ENCODE measurements at regions of chrX and their contacts with region 1.

Region 1: GRCh38 chrX:73855546-73855945 is 292.5 kb downstream of the CHIC1 start:
- DNase-seq: no peak

Region 2: GRCh38 chrX:73799888-73800287 is 55.7 kb before region 1 on chrX:
- intact Hi-C with region 1: no loop called
- DNase-seq: no peak

Region 3: DNA sequence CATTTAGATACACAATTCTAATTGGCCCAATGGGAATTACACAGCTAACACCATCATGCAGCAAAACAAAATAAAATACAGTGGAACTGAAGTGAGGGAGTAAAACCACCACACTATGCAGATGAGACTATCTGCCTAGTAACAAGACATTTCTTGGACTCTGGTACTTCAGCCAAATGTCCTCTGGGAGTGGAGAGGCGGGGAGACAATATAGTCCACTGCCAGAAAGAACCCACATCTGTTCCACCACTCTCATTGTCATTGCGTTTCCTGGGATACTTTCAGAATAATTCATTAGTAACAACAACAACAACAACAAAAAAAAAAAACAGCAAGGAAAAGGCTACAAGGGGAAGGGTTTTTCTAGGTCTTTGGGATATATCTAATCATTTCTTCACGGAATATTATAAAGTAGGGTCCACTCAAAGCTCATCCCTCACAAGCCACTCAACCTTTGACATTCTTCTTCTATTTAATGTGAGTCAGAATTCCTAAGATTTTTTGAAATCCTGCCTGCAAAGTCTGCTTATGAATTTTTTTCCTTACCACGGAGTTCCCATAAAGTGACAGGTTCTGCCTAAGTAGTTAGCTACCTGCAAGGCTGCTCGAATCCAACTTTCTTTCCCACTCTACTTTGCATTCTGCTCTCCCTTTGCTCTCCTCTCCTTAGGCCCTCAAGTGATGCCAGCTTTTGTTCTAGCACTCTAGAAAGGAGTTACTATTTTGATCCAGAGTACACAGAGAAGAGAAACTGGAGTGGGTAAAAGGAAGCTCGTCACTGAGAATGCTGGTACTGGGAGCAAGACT is 38.0 kb before region 1 on chrX:
- intact Hi-C with region 1: no loop called
- DNase-seq: no peak

Region 4: GRCh38 chrX:73828080-73828720 is 27.3 kb before region 1 on chrX:
- intact Hi-C with region 1: no loop called
- DNase-seq: no peak

Region 5: DNA sequence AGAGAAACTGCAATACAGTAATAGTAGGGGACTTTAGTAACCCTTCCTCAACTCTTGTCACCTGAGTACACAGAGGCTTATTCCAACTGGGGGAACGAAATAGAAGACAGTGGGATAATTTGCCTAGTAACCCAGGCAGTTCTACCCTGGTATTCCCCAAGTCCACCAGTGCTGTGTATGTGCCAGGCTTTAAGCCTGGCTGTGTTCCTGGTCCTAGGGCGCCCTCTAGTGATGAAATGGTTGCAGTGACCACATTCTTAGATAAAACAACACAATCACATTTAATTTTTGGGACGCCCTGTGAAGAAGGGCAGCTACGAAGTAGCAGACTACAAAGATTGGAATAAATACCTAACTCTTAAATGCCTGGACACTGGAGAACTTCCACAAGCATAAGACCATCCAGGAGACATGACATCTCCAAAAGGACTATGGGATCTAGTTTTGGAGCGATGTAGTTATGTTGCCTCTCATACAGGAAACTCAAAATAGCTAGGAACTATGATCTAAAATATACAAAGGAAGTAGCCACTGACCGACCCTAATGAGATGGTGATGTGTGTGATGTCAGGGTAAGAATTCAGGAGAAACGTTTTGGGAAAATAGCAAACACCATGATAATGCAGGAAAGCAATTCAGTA is 160.0 kb after region 1 on chrX:
- intact Hi-C with region 1: loop called in 1 of 2 experiments (anchors 5 kb)
- DNase-seq: no peak

Region 6: GRCh38 chrX:74133156-74133796 is 277.7 kb after region 1 on chrX:
- intact Hi-C with region 1: loop called (anchors 5 kb)
- DNase-seq: no peak